Posterior cingulate gyrus (tissue), 11 donors: ENCODE measurements at regions of chr1 and their contacts with region 1.

Region 1: GRCh38 chr1:39408641-39409054 is 82.8 kb upstream of the BMP8A start:
- DNase-seq: peak; percentile 84 to 99 (median 90)

Region 2: GRCh38 chr1:39204441-39205081 is 204.1 kb before region 1 on chr1 and contains the start of gene MACF1:
- intact Hi-C with region 1: loop called (anchors 10 kb)
- DNase-seq: peak in 4 of 10 donors; percentile 25 to 87 (median 56)

Region 3: DNA sequence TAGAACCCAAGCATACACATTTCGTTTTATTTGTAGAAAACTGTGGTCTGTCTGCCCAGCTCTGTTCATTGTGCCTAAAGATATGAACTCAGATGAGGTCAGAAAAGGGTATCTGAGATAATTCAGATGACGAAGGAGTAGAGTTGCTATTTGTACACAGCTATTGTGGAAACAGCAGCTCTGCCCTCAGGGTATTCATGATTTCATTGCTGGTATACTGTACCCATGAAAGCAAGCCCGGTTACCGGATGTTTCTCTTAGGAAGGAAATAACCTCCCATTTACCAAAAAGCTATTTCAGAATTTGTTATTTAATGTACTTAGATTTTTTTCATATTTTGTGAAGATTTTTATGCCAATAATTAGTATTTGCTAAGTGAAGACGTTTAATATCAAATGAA is 1002.6 kb after region 1 on chr1:
- intact Hi-C with region 1: no loop called
- DNase-seq: no peak